ENCODE measurements at regions of chr16 and their contacts with region 1.

Region 1: GRCh38 chr16:49608779-49609178 is 235.2 kb downstream of the C16orf78 start:
- DNase-seq: no peak
- H3K4me3 ChIP-seq: no peak overlapping the region
- H3K27me3 ChIP-seq: 0 out of 2 replicates have a peak, but pooled peaks cover 2% of the 10 kb centered on the region
- CTCF ChIP-seq: peak; percentile 86

Region 2: GRCh38 chr16:49528060-49528865 is 80.5 kb before region 1 on chr16:
- CTCF ChIA-PET with region 1: no interaction called
- POLR2A ChIA-PET with region 1: no interaction called
- DNase-seq: no peak
- H3K4me3 ChIP-seq: no peak overlapping the region
- H3K27me3 ChIP-seq: no peaks in the 10 kb centered on the region
- CTCF ChIP-seq: no peak

Region 3: DNA sequence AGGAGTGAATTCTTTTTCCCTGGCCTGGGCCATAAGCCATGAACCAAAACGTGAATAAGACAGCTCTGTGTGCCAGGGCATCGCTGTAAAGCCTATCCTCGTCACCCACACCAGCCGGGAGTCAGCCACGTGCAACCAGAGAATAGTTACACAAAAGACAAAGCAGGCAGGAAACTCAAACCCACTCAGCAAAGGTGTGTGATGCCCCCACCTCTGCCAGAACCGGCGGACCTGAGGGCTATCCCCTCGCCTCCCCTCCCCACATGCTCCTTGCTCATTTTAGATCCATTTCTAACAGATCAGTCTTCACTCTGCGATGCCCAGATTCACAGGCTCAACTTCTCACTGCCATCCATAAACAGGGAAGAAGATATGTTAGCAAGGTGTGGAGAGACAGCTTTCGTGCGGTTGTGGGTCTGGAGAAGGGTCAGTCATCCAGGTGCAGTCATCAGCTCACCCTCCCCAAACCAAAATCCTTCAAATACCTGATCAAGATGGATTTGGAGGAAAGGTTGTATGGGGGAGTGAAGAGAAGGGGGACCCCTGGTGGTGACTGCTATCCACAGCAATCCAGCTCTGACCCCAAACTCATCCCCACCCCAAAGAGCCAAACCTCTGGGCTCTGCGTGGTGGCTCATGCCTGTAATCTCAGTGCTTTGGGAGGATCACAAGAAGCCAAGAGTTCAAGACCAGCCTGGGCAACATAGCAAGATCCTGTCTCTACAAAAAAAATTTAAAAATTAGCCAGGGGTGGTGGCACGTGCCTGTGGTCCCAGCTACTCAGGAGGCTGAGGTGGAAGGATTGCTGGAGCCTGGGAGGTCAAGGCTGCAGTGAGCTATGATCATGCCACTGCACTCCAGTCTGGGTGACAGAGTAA is 16.0 kb before region 1 on chr16:
- CTCF ChIA-PET with region 1: interaction called, 14 read pairs
- POLR2A ChIA-PET with region 1: no interaction called
- DNase-seq: no peak
- H3K4me3 ChIP-seq: no peak overlapping the region
- H3K27me3 ChIP-seq: no peaks in the 10 kb centered on the region; the same call in 1 of the 2 replicates
- CTCF ChIP-seq: peak; percentile 81

Region 4: DNA sequence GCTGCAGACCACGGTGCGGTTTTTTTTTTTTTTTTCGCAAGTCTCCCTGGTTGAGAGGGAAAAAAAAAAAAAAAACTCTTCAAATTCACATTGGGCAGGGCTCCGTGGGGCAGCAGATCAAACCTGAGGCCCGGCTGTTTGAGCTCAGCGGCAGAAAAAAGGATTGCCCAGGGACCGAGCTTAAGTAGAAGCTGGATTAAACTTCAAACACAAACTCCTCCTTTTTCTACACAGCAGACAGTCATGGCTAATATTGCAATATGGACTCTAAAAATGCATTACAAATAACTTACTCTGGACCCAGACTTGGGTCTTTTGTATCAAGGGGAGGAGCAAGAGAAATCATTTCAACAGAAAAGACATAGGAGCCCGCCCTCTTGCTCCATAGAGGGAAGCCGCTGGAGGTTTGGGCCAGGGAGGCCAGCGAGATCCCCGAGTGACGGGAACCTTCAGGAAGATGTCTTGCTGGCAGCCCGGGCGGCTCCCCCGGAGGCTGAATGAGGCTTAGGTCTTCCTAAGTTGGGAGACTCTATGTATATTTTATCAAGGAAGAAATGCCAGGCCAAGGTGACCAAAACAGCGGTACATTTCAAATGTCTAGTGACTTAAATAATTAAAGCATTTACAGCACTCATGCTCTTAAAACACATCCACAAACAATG is 79.4 kb after region 1 on chr16:
- CTCF ChIA-PET with region 1: no interaction called
- POLR2A ChIA-PET with region 1: no interaction called
- DNase-seq: no peak
- H3K4me3 ChIP-seq: no peak overlapping the region
- H3K27me3 ChIP-seq: 0 out of 2 replicates have a peak, but pooled peaks cover 2% of the 10 kb centered on the region
- CTCF ChIP-seq: no peak

Region 5: DNA sequence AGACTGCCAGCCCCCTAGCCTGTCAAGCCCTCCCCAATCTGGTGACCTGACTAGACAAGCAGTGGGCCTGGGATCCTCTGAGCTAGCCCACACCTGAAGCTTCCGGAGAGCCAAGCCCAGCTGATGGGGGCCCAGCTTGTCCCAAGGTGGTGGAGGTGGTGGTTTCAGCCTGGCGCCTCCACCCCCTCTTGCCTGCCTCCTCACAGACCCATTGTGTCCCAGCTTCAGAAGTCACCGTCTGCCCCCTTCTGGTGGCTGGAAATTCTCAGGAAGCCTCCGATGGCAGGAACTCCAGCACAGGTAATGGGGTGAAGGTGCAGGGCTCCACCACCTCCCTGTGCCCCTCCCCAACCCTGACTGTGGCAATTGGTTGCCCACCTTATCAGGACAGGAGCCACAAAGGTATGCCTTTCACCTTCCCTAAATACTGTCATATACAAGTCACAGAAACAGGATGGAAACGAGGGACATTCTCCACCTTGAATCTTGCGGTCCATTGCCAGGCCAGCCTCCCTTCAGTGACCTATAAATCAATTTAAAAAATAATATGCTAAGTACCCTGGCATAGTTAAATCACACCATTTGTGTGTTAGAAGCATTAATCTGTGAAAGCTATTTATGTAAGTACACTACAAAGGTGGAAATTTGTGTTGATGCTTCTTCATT is 313.1 kb after region 1 on chr16:
- CTCF ChIA-PET with region 1: interaction called, 15 read pairs
- POLR2A ChIA-PET with region 1: no interaction called
- DNase-seq: no peak
- H3K4me3 ChIP-seq: no peak overlapping the region
- H3K27me3 ChIP-seq: no peaks in the 10 kb centered on the region
- CTCF ChIP-seq: peak; percentile 58

Measured in BJ (cell line).